ENCODE measurements at regions of chr9 and their contacts with region 1.

Region 1: GRCh38 chr9:106104887-106105286 is 410.5 kb downstream of the TMEM38B start:
- DNase-seq: no peak
- H3K4me3 ChIP-seq: no peak overlapping the region
- H3K27ac ChIP-seq: no peak overlapping the region
- H3K4me1 ChIP-seq: peaks cover 4% of the 10 kb centered on the region
- CTCF ChIP-seq: no peak

Region 2: GRCh38 chr9:106156465-106156864 is 51.6 kb after region 1 on chr9:
- CTCF ChIA-PET with region 1: no interaction called
- POLR2A ChIA-PET with region 1: no interaction called
- intact Hi-C with region 1: loop called (anchors 10 kb)
- DNase-seq: no peak
- H3K4me3 ChIP-seq: no peak overlapping the region
- H3K27ac ChIP-seq: no peak overlapping the region
- H3K4me1 ChIP-seq: no peaks in the 10 kb centered on the region
- CTCF ChIP-seq: no peak